Activated CD4-positive, alpha-beta T cell treated with anti-CD3 and anti-CD28 coated beads, Interleukin-2, amount 10 ng/mL, durations not matched to agents 24 days and 14 days (primary cell): ENCODE measurements at regions of chr4 and their contacts with region 1.

Region 1: GRCh38 chr4:101328063-101328602 is 19.2 kb downstream of the PPP3CA start:
- DNase-seq: peak; percentile 76
- H3K4me3 Mint-ChIP-seq: peak overlapping the region; percentile 68
- H3K27ac Mint-ChIP-seq: peak overlapping the region; percentile 54
- H3K4me1 Mint-ChIP-seq: peaks cover 18% of the 10 kb centered on the region
- H3K27me3 Mint-ChIP-seq: peaks cover 37% of the 10 kb centered on the region

Region 2: GRCh38 chr4:100977746-100978397 is 350.3 kb before region 1 on chr4:
- intact Hi-C with region 1: no loop called
- DNase-seq: no peak
- H3K4me3 Mint-ChIP-seq: no peak overlapping the region
- H3K27ac Mint-ChIP-seq: no peak overlapping the region
- H3K4me1 Mint-ChIP-seq: no peaks in the 10 kb centered on the region
- H3K27me3 Mint-ChIP-seq: peaks cover 19% of the 10 kb centered on the region

Region 3: GRCh38 chr4:101205916-101206315 is 122.2 kb before region 1 on chr4:
- intact Hi-C with region 1: loop called (anchors 1 kb)
- DNase-seq: peak; percentile 86
- H3K4me3 Mint-ChIP-seq: peak overlapping the region; percentile 13
- H3K27ac Mint-ChIP-seq: peak overlapping the region; percentile 50
- H3K4me1 Mint-ChIP-seq: peaks cover 23% of the 10 kb centered on the region
- H3K27me3 Mint-ChIP-seq: peaks cover 3% of the 10 kb centered on the region

Region 4: GRCh38 chr4:101282076-101282844 is 45.9 kb before region 1 on chr4:
- intact Hi-C with region 1: loop called (anchors 1 kb)
- DNase-seq: peak; percentile 75
- H3K4me3 Mint-ChIP-seq: no peak overlapping the region
- H3K27ac Mint-ChIP-seq: no peak overlapping the region
- H3K4me1 Mint-ChIP-seq: peaks cover 28% of the 10 kb centered on the region
- H3K27me3 Mint-ChIP-seq: no peaks in the 10 kb centered on the region

Region 5: DNA sequence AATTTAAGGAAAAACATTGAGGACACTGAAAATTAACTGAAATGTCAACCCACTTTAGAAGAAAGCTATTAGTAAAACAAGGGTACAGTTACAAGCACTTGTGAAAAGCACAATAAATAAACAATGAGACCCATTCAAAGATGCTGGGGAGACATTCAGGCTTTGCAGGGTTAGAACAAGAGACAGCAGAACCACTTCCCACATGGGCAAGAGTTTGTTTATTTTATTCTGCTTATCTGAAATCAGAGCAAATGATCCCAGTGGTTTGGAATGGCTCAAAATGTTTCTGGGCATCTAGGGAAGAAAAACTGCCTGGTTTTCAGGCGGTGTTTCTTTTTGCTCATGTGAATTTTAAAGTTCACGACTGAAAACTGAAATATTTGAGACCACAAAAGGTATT is 23.2 kb before region 1 on chr4:
- intact Hi-C with region 1: loop called (anchors 2 kb)
- DNase-seq: no peak
- H3K4me3 Mint-ChIP-seq: no peak overlapping the region
- H3K27ac Mint-ChIP-seq: no peak overlapping the region
- H3K4me1 Mint-ChIP-seq: peaks cover 12% of the 10 kb centered on the region
- H3K27me3 Mint-ChIP-seq: peaks cover 3% of the 10 kb centered on the region